CD4-positive, alpha-beta memory T cell (primary cell): ENCODE measurements at regions of chr2 and their contacts with region 1.

Region 1: DNA sequence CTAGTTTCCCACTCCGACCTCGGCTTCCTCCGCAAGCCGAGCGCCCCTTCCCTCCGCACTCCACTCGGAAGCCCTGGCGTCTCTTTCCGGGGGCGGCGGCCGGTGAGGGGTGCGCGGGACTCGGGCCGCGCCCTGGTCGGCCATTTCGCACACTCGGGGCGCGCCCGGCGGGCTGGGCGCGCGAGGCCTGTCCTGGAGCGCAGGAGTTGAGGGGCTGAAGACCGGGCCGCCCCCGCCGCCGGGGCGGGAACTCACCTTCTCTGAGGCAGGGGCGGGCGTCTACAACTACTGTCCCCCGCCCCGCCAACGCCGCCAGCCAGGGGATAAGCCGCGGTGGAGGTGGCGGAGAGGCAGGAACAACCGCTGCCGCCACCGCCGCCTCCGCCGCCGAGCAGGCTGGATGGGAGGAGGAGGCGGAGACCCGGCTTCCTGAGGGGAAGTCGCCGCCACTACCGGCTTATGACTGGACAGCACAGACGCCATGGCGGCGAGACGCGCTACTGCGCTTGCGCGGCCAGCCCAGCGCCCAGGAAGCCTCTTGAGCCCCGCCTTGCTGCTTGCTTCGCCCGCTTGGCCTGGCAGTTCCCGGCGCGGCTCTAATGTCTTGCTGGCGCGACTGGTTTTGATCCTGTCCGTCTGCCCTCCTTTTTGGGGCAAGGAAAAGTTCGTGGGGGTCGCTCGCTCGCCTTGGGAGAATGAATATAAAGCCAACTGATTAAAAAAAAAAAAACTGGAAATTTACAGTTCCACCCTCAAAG is at the start of gene KRCC1:
- DNase-seq: peak; percentile 94 to 96 (median 95)
- H3K4me3 ChIP-seq: peak within 1 kb of the TSS; percentile 76 to 84
- H3K4me3 Mint-ChIP-seq: peak within 1 kb of the TSS; percentile 90 to 97 (median 95)
- H3K27ac ChIP-seq: peak within 1 kb of the TSS; percentile 93
- H3K27ac Mint-ChIP-seq: peak within 1 kb of the TSS; percentile 89 to 98 (median 98)
- H3K4me1 ChIP-seq: peaks cover 33% of the 10 kb centered on the region
- H3K4me1 Mint-ChIP-seq: peaks cover 35 to 50% (median 42%) of the 10 kb centered on the region in 4 donors
- H3K27me3 ChIP-seq: no peaks in the 10 kb centered on the region
- H3K27me3 Mint-ChIP-seq: no peaks in the 10 kb centered on the region
- total RNA-seq, gene KRCC1: 32.3 to 35.7 TPM

Region 2: DNA sequence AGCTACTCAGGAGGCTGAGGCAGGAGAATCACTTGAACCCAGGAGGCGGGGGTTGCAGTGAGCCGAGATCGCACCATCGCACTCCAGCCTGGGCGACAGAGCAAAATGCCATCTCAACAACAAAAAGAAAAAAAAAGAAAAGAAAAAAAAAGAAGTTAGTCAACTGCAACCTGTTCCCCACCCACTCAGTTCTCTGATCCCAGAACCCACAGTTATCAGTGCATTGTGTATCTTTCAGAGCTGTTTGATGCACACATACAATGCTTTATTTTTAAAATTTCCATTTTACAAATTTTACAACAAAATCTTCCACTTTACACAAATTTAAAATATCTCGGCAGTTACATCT is 53.2 kb before region 1 on chr2:
- CTCF ChIA-PET with region 1: interaction called, 10 read pairs
- POLR2A ChIA-PET with region 1: no interaction called
- intact Hi-C with region 1: no loop called
- DNase-seq: no peak
- H3K4me3 ChIP-seq: no peak overlapping the region
- H3K4me3 Mint-ChIP-seq: no peak overlapping the region
- H3K27ac ChIP-seq: no peak overlapping the region
- H3K27ac Mint-ChIP-seq: no peak overlapping the region
- H3K4me1 ChIP-seq: peaks cover 7% of the 10 kb centered on the region
- H3K4me1 Mint-ChIP-seq: peaks cover 2 to 7% (median 5%) of the 10 kb centered on the region in 4 donors
- H3K27me3 ChIP-seq: no peaks in the 10 kb centered on the region
- H3K27me3 Mint-ChIP-seq: no peaks in the 10 kb centered on the region

Region 3: DNA sequence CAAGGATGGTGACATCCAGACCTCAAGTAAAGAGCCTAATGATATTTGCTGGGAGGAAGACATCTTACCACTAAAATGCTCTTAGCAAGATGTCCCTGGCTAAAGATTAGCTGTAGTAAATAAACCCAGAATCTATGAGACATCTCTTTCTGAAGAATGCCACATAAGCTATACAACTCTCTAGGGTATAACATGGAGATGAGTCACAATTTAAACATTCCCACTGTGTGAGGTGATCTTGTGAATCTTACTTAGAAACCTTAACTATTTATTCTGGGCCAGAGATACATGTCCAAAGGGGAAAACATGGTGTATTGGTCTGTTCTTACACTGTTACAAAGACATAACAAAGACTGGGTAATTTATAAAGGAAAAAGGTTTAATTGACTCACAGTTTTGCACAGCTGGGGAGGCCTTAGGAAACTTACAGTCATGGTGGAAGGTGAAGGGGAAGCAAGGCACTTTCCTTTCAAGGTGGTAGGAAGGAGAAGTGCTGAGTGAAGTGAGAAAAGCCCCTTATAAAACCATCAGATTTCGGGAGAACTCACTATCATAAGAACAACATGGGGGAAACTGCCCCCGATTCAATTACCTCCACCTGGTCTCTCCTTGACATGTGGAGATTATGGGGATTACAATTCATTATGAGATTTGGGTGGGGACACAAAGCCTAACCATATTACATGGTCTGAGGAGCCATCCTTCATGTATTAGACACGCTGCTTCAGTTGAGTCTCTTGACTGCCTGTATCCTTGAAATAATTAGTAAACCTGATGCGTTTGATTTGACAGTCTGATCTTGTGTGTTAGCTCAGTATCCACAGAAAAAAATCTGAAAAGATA is 17.1 kb before region 1 on chr2:
- CTCF ChIA-PET with region 1: interaction called, 13 read pairs
- POLR2A ChIA-PET with region 1: interaction called, 4 read pairs
- intact Hi-C with region 1: no loop called
- DNase-seq: no peak
- H3K4me3 ChIP-seq: no peak overlapping the region
- H3K4me3 Mint-ChIP-seq: no peak overlapping the region
- H3K27ac ChIP-seq: no peak overlapping the region
- H3K27ac Mint-ChIP-seq: peak overlapping the region in 1 of 7 donors; percentile 33
- H3K4me1 ChIP-seq: no peaks in the 10 kb centered on the region
- H3K4me1 Mint-ChIP-seq: peaks cover 22 to 53% (median 36%) of the 10 kb centered on the region in 4 donors
- H3K27me3 ChIP-seq: no peaks in the 10 kb centered on the region
- H3K27me3 Mint-ChIP-seq: no peaks in the 10 kb centered on the region

Region 4: GRCh38 chr2:88077080-88077479 is 21.5 kb after region 1 on chr2:
- CTCF ChIA-PET with region 1: interaction called, 16 read pairs
- POLR2A ChIA-PET with region 1: no interaction called
- intact Hi-C with region 1: no loop called
- DNase-seq: no peak
- H3K4me3 ChIP-seq: no peak overlapping the region
- H3K4me3 Mint-ChIP-seq: no peak overlapping the region
- H3K27ac ChIP-seq: no peak overlapping the region
- H3K27ac Mint-ChIP-seq: no peak overlapping the region
- H3K4me1 ChIP-seq: no peaks in the 10 kb centered on the region
- H3K4me1 Mint-ChIP-seq: no peaks in the 10 kb centered on the region
- H3K27me3 ChIP-seq: no peaks in the 10 kb centered on the region
- H3K27me3 Mint-ChIP-seq: peaks cover 2 to 3% of the 10 kb centered on the region in 2 donors

Region 5: DNA sequence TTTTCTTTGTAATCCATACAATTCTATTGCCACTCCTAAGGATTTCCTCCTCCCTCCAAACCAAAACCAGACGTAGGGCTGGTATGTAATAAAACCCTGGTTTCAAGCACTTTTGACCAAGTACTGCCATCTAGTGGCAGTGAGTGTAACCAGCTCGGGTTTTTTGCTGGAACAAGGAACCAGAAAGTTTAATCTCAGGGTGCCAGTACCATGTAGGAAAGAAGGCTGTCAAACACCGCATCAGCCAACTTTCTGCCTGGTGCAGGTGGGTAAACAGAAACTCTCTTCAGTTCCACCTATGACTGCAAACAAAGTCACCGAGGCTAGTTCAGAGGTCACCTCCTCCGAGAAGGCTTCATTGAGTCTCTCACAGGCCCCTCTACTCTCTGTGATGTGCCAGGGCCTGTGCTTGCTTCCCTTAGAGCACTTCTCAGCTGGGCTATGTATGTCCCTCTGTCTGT is 104.4 kb after region 1 on chr2:
- CTCF ChIA-PET with region 1: interaction called, 116 read pairs
- POLR2A ChIA-PET with region 1: interaction called, 5 read pairs
- intact Hi-C with region 1: loop called (anchors 1 kb)
- DNase-seq: peak; percentile 44 to 56 (median 54)
- H3K4me3 ChIP-seq: no peak overlapping the region
- H3K4me3 Mint-ChIP-seq: no peak overlapping the region
- H3K27ac ChIP-seq: no peak overlapping the region
- H3K27ac Mint-ChIP-seq: no peak overlapping the region
- H3K4me1 ChIP-seq: no peaks in the 10 kb centered on the region
- H3K4me1 Mint-ChIP-seq: peaks cover 0 to 2% (median under 1%) of the 10 kb centered on the region in 4 donors
- H3K27me3 ChIP-seq: no peaks in the 10 kb centered on the region
- H3K27me3 Mint-ChIP-seq: no peaks in the 10 kb centered on the region

Region 6: GRCh38 chr2:88614497-88615157 is 559.1 kb after region 1 on chr2:
- CTCF ChIA-PET with region 1: no interaction called
- POLR2A ChIA-PET with region 1: no interaction called
- intact Hi-C with region 1: no loop called
- DNase-seq: no peak
- H3K4me3 ChIP-seq: no peak overlapping the region
- H3K4me3 Mint-ChIP-seq: no peak overlapping the region
- H3K27ac ChIP-seq: no peak overlapping the region
- H3K27ac Mint-ChIP-seq: no peak overlapping the region
- H3K4me1 ChIP-seq: no peaks in the 10 kb centered on the region
- H3K4me1 Mint-ChIP-seq: peaks cover 16 to 29% (median 23%) of the 10 kb centered on the region in 4 donors
- H3K27me3 ChIP-seq: no peaks in the 10 kb centered on the region
- H3K27me3 Mint-ChIP-seq: no peaks in the 10 kb centered on the region

Region 7: DNA sequence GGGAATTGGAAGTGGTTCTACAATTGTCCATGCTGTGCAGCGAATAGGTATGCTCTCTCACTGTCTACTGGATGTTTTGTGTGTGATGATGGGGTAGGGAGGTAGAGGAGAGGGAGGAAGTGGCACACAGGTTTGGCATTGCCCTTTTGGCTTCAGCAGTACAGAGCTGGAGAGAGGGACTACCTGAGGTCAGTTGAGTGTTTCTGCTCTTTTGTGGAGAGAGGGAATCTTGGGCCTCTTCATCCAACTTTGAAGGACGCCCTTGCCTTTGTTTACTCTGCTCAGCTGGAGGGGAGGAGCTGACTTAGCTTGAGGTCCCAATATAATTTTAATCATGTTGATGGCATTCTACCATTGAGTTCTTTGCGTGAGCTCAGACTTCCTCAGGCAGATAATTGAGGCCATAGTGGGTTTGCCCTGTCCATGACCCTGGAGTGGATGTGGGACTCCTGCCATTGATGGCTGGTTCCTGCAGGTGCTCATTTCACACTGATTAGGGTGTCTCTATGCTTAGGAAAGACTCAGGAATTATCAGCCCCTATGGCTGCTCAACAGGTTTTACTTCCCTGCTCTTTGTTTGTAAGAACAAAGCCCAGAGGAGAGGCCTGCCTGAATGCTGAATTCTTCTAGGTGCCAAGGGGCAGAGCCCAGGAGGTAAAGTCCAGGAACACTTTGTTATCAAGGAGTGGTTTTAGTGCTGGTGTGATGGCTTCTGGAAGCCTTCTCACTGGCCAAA is 643.1 kb after region 1 on chr2:
- CTCF ChIA-PET with region 1: no interaction called
- POLR2A ChIA-PET with region 1: no interaction called
- intact Hi-C with region 1: no loop called
- DNase-seq: no peak
- H3K4me3 ChIP-seq: no peak overlapping the region
- H3K4me3 Mint-ChIP-seq: no peak overlapping the region
- H3K27ac ChIP-seq: no peak overlapping the region
- H3K27ac Mint-ChIP-seq: peak overlapping the region in 1 of 7 donors; percentile 81
- H3K4me1 ChIP-seq: peaks cover 18% of the 10 kb centered on the region
- H3K4me1 Mint-ChIP-seq: peaks cover 21 to 43% (median 28%) of the 10 kb centered on the region in 4 donors
- H3K27me3 ChIP-seq: no peaks in the 10 kb centered on the region
- H3K27me3 Mint-ChIP-seq: no peaks in the 10 kb centered on the region